MCF 10A (cell line): ENCODE measurements at regions of chr10 and their contacts with region 1.

Region 1: DNA sequence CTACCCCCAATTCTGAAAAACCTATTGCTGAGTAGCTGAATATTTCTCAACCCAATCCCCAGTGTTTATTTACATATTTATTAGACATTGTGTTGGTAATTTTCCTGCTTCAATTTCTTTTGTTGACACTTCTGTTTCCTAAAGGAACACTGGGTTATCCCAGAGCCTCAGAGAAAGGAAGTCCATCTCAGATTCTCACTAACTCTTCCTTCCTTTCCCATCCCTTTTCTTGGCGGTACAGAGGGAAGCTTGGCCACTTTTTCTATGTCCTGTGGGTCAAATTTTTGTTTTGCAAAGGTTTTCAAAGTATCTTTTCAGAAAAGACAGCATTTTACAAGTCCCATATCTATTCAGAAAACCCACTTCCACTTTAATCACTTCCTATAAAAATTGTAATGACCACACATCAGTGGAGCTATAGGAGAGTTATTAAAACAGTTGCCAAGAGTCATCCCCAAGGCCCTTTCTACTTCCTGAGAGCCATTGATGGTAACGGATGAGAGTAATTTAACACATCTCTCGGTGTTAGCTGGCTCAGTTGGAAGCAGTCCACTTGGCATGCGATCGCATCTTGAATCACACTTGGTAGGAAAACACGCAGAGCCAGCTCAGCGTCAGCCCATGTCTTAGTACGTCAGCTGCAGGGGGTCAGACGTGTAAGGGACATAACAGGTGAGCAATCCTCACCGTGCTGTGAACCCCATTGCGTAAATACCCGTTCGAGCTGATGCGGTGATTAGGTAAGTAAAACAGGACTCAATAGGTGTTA is 231.1 kb upstream of the ADARB2 start:
- DNase-seq: peak; percentile 98
- H3K4me3 Mint-ChIP-seq: no peak overlapping the region
- H3K27ac Mint-ChIP-seq: peak overlapping the region; percentile 36
- H3K4me1 Mint-ChIP-seq: peaks cover 40% of the 10 kb centered on the region
- H3K27me3 Mint-ChIP-seq: no peaks in the 10 kb centered on the region
- CTCF ChIP-seq: no peak

Region 2: DNA sequence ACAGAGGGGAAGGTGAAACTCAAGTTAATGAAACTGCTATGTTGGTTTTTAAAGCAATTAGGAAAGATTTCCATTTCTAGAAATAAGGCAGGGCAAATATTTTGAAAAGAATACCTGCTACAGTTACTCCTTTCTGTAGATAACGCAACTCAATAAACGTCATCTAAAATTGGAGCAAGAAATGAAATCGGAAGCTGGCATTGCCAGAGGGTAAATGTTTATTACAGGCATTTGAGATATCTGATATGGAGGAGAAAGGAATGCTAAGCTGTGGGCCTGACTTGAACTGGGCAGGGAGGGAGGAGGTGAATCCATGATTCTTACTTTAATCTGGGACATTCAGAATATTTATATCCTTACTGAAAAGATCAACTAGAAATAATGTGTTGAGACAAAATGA is 14.1 kb before region 1 on chr10:
- CTCF ChIA-PET with region 1: interaction called, 3 read pairs
- POLR2A ChIA-PET with region 1: interaction called, 17 read pairs
- intact Hi-C with region 1: no loop called
- DNase-seq: peak; percentile 68
- H3K4me3 Mint-ChIP-seq: no peak overlapping the region
- H3K27ac Mint-ChIP-seq: peak overlapping the region; percentile 21
- H3K4me1 Mint-ChIP-seq: peaks cover 32% of the 10 kb centered on the region
- H3K27me3 Mint-ChIP-seq: no peaks in the 10 kb centered on the region
- CTCF ChIP-seq: no peak

Region 3: DNA sequence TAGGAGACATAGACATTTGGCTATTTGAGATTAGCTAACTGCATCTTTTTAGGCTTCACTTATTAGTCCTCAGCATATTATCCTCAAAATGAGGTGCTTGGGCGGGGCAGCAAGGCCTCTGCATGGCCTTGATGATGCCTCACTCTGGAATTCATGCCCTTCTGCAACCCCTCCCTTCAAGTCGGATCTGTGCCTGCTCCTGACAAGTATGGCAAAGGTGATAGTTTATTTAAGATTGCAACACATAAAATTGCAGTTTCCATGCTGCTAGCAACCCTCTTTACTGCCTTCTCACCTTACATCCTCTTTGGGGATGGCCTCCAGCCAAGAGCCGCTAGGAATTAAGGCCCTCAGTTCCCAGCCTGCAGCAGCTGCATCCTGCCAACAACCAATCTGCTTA is 10.2 kb after region 1 on chr10:
- CTCF ChIA-PET with region 1: no interaction called
- POLR2A ChIA-PET with region 1: interaction called, 13 read pairs
- intact Hi-C with region 1: no loop called
- DNase-seq: peak; percentile 91
- H3K4me3 Mint-ChIP-seq: no peak overlapping the region
- H3K27ac Mint-ChIP-seq: peak overlapping the region; percentile 80
- H3K4me1 Mint-ChIP-seq: peaks cover 13% of the 10 kb centered on the region
- H3K27me3 Mint-ChIP-seq: no peaks in the 10 kb centered on the region
- CTCF ChIP-seq: no peak

Region 4: DNA sequence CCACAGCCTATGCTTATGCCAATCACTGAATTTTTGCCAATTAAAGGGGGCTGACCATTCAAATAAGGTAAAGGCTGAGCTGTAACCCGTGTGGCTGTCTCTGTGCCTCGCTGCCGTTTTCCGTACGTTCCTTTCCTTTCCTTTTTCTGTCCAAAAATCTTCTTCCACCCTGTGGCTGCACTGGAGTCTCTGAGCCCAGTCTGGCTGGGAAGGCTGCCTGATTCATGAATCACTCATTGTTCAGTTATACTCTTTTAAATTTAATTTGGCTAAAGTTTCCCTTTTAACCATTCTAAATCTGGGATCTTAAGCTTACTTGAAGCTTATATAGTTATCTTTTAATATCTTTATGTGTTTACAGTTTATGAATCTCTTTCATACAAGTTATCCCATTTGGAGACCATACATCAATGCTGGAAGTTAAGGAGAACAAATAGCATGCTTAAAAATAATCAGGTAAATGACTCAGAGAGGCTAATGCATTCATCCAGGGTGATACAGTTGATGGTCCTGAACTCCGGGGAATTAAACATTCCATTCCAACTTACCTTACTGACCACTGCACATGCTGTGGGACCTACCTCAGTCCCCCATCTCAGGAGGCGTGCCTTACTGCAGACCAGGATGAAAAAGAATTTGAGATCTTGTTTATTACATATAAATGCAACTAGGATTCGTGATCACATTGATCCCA is 154.1 kb after region 1 on chr10:
- CTCF ChIA-PET with region 1: interaction called, 4 read pairs
- POLR2A ChIA-PET with region 1: interaction called, 4 read pairs
- intact Hi-C with region 1: loop called (anchors 2 kb)
- DNase-seq: peak; percentile 57
- H3K4me3 Mint-ChIP-seq: no peak overlapping the region
- H3K27ac Mint-ChIP-seq: peak overlapping the region; percentile 80
- H3K4me1 Mint-ChIP-seq: peaks cover 41% of the 10 kb centered on the region
- H3K27me3 Mint-ChIP-seq: no peaks in the 10 kb centered on the region
- CTCF ChIP-seq: no peak